Activated B cell treated with CpG ODN at 0.5 μM for 24 hours (primary cell): ENCODE measurements at regions of chr13 and their contacts with region 1.

Region 1: GRCh38 chr13:94549232-94550061 is 46.5 kb downstream of the TGDS start:
- DNase-seq: peak; percentile 86
- ATAC-seq: peak; percentile 90
- H3K4me3 Mint-ChIP-seq: peak overlapping the region; percentile 88
- H3K27ac Mint-ChIP-seq: peak overlapping the region; percentile 92
- H3K4me1 Mint-ChIP-seq: peaks cover 31% of the 10 kb centered on the region
- H3K27me3 Mint-ChIP-seq: peaks cover 4% of the 10 kb centered on the region
- CTCF ChIP-seq: no peak

Region 2: GRCh38 chr13:94411747-94412146 is 137.7 kb before region 1 on chr13:
- CTCF ChIA-PET with region 1: no interaction called
- POLR2A ChIA-PET with region 1: no interaction called
- intact Hi-C with region 1: no loop called
- DNase-seq: no peak
- ATAC-seq: no peak
- H3K4me3 Mint-ChIP-seq: no peak overlapping the region
- H3K27ac Mint-ChIP-seq: no peak overlapping the region
- H3K4me1 Mint-ChIP-seq: no peaks in the 10 kb centered on the region
- H3K27me3 Mint-ChIP-seq: peaks cover 14% of the 10 kb centered on the region
- CTCF ChIP-seq: no peak

Region 3: DNA sequence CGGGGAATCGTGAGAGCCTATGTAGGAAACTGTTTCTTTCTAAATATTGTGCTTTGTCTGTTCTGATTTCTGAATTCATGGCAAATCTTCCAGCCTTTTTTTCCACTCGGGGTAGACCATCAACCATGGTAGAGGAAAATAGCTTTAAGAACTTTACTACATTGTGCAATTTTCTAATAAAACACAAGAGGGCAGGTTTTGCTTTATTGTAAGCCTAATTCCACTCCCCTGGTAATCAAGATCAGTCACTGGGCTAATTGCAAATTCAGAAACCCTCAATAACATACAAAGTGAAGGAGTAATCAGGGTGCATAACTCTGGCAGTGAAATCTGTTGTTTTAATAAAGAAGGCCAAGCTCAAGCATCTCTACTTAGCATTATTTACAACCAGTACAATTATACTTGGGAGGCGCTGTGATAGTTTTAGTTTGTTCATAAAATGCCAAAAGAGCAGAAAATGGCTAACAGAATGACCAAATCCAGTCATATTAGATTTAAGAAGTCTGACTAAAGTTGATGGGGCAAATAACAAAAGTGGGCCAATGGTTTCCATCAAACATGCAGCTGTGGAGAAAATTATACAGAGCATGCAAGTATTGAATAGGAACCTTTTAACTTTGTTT is 113.7 kb before region 1 on chr13:
- CTCF ChIA-PET with region 1: interaction called, 3 read pairs
- POLR2A ChIA-PET with region 1: interaction called, 5 read pairs
- intact Hi-C with region 1: loop called (anchors 1 kb)
- DNase-seq: no peak
- ATAC-seq: peak; percentile 70
- H3K4me3 Mint-ChIP-seq: no peak overlapping the region
- H3K27ac Mint-ChIP-seq: no peak overlapping the region
- H3K4me1 Mint-ChIP-seq: peaks cover 12% of the 10 kb centered on the region
- H3K27me3 Mint-ChIP-seq: peaks cover 7% of the 10 kb centered on the region
- CTCF ChIP-seq: no peak

Region 4: DNA sequence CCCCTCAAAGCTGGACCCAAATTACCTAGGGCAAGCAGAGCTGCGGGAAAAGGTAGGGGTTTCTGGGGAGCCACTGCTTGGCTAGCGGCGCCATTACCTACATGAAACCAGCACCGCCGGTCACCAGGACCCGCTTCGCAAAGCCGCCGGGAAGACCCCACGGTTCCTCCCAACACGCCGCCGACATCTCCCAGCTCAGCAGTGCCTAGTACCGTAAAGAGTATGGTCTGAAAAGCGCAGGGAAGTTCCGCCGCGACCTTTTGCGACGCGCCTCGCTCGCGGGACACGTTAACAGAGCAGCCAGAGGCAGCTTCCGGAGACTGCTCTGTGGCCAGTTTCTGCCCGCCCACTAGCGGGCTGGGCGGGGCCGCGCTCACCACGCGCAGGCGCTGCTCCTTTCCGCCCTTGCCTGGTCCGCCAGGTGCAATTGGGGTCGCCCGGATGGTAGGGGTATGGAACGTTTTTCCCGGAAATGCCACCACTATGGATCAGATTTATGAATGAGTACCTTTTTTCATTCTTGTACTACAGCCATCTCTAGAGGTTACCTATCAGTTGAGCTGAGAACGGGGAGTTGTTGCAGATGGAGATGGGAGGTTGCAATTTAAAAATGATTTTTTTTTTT is 46.6 kb after region 1 on chr13 and contains the start of gene TGDS:
- CTCF ChIA-PET with region 1: interaction called, 13 read pairs
- POLR2A ChIA-PET with region 1: interaction called, 92 read pairs
- intact Hi-C with region 1: loop called (anchors 1 kb)
- DNase-seq: peak; percentile 82
- ATAC-seq: peak; percentile 97
- H3K4me3 Mint-ChIP-seq: peak within 1 kb of the TSS; percentile 91
- H3K27ac Mint-ChIP-seq: peak within 1 kb of the TSS; percentile 89
- H3K4me1 Mint-ChIP-seq: peaks cover 31% of the 10 kb centered on the region
- H3K27me3 Mint-ChIP-seq: no peaks in the 10 kb centered on the region
- CTCF ChIP-seq: no peak
- total RNA-seq, gene TGDS: 11.5 and 12.7 TPM in 2 replicates

Region 5: GRCh38 chr13:94601446-94602431 is 52.3 kb after region 1 on chr13 and contains the start of gene GPR180:
- CTCF ChIA-PET with region 1: interaction called, 13 read pairs
- POLR2A ChIA-PET with region 1: interaction called, 92 read pairs
- intact Hi-C with region 1: loop called (anchors 1 kb)
- DNase-seq: peak; percentile 80
- ATAC-seq: peak; percentile 99
- H3K4me3 Mint-ChIP-seq: peak within 1 kb of the TSS; percentile 86
- H3K27ac Mint-ChIP-seq: peak within 1 kb of the TSS; percentile 87
- H3K4me1 Mint-ChIP-seq: peaks cover 18% of the 10 kb centered on the region
- H3K27me3 Mint-ChIP-seq: no peaks in the 10 kb centered on the region
- CTCF ChIP-seq: no peak
- total RNA-seq, gene GPR180: 4.2 and 5.1 TPM in 2 replicates